ENCODE measurements at regions of chr18 and their contacts with region 1.

Region 1: GRCh38 chr18:3151399-3152264 is 68.1 kb downstream of the MYOM1 start:
- DNase-seq: peak in 1 of 2 donors; percentile 15
- ATAC-seq: peak; percentile 63

Region 2: DNA sequence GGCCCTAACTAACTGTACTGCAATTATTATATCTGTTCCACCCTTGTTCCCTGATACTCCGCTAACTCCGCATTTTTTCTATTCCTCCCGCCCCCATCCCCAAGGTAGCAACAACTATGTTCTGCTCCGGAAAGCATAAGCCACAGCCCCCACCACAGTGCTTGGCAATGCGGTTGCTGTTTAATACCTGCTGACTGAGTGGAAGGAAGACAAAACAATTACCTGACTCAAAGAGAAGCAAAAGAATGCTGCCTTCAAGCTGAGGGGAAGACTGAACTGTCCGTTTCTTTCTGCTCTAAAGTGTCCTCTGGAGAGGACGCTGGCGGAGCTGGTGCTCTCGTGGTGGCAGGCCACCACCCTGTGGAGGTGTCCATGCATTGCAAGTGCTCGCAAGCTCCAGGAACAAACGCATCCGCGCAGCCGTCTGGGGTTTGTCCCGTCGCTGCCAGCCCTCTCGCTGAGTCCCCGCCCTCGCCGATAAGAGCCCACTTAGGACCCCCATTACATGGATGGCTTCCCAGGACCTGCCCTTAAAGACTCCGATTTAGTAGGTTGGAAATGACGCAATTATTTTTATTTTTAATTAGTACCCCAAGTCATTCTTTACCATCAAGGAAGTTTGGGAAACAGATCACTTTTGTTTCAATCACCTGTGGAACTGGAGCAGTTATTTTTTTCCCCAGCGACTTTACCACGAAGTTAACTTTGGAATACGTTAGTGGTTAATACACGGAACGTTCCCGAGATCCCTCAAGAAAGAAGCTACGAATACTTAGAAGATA is 94.4 kb after region 1 on chr18:
- intact Hi-C with region 1: loop called in 1 of 2 experiments (anchors 10 kb)
- DNase-seq: peak; percentile 90 to 91
- ATAC-seq: peak; percentile 68